CD14-positive monocyte (primary cell): ENCODE measurements at regions of chr11 and their contacts with region 1.

Region 1: DNA sequence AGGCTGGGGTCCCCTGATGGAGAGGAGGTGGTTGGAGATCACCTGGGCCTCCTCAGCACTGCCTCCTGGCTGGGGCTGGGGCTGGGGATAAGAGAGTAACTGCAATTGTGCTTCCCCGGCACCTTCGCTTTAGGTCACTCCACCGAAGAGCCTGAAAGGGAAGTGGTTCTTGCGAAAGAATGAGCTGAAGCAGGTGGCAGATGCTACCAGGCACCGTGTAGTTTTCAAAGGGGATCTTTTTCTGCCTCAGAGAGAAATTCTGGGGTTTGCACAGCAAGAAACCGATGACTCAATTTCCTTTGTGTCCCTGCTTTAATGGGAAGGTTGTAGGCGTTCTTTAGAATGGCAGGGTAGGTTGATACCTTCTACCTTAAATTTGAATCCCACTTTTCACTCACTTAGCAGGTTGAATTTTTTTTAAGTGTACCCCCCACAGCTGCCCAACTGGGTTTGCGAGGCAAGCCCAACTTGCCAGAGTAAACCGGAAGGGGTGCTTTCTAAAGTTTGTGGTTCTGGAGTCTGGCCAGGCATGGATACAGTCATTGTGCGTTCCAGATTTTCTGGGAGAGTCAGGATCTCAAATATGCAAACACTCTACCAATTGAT is 5.3 kb downstream of the CD44 start:
- DNase-seq: peak; percentile 75 to 95 (median 87)
- H3K4me3 ChIP-seq: peak overlapping the region; percentile 15 to 93 (median 15)
- H3K4me3 Mint-ChIP-seq: peak overlapping the region; percentile 64 to 73
- H3K27ac ChIP-seq: peak overlapping the region; percentile 67 to 98
- H3K27ac Mint-ChIP-seq: peak overlapping the region; percentile 84 to 98 (median 87)
- H3K4me1 ChIP-seq: peaks cover 53 to 78% of the 10 kb centered on the region in 2 donors
- H3K4me1 Mint-ChIP-seq: peaks cover 77% of the 10 kb centered on the region
- H3K27me3 ChIP-seq: no peaks in the 10 kb centered on the region
- H3K27me3 Mint-ChIP-seq: no peaks in the 10 kb centered on the region
- CTCF ChIP-seq: no peak

Region 2: GRCh38 chr11:34926101-34926830 is 218.0 kb before region 1 on chr11:
- intact Hi-C with region 1: loop called in 1 of 2 experiments (anchors 10 kb)
- DNase-seq: peak; percentile 18 to 46 (median 45)
- H3K4me3 ChIP-seq: no peak overlapping the region
- H3K4me3 Mint-ChIP-seq: no peak overlapping the region
- H3K27ac ChIP-seq: no peak overlapping the region
- H3K27ac Mint-ChIP-seq: no peak overlapping the region
- H3K4me1 ChIP-seq: peaks cover 0 to 3% of the 10 kb centered on the region in 2 donors
- H3K4me1 Mint-ChIP-seq: peaks cover 13% of the 10 kb centered on the region
- H3K27me3 ChIP-seq: no peaks in the 10 kb centered on the region
- H3K27me3 Mint-ChIP-seq: no peaks in the 10 kb centered on the region
- CTCF ChIP-seq: peak; percentile 85

Region 3: DNA sequence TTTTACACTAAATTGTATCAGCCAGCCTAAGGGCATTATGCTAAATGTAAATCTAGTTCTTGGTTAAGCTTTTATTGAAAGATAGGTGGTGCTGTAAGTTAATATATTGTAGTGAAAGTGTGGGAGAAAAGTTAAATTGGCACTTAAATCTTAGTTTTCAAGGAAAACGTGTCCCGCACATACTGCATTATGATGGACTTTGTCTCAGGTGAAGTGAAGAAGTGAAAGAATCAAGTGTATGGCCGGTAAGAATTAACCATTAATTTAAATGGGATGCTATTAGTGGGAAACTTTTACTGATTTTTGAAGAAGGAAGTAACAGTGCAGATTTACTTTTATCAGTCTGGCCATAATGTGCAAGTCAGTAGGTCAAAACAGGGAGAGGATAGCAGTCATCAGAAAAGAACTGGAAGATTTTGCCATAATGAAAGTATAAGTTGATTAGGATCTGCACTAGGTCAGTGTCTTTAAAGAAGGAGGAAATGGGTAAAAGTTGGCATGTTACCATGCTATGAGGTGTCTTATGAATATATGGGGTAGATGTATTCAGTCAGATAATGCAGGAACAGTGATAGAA is 146.2 kb before region 1 on chr11:
- intact Hi-C with region 1: loop called (anchors 5 kb)
- DNase-seq: peak in 2 of 3 donors; percentile 34 to 62
- H3K4me3 ChIP-seq: peak overlapping the region in 1 of 3 experiments; percentile 42
- H3K4me3 Mint-ChIP-seq: peak overlapping the region in 1 of 2 donors; percentile 36
- H3K27ac ChIP-seq: peak overlapping the region in 1 of 2 donors; percentile 46
- H3K27ac Mint-ChIP-seq: peak overlapping the region; percentile 1 to 89 (median 65)
- H3K4me1 ChIP-seq: peaks cover 6 to 7% of the 10 kb centered on the region in 2 donors
- H3K4me1 Mint-ChIP-seq: peaks cover 12% of the 10 kb centered on the region
- H3K27me3 ChIP-seq: no peaks in the 10 kb centered on the region
- H3K27me3 Mint-ChIP-seq: no peaks in the 10 kb centered on the region
- CTCF ChIP-seq: peak; percentile 81

Region 4: DNA sequence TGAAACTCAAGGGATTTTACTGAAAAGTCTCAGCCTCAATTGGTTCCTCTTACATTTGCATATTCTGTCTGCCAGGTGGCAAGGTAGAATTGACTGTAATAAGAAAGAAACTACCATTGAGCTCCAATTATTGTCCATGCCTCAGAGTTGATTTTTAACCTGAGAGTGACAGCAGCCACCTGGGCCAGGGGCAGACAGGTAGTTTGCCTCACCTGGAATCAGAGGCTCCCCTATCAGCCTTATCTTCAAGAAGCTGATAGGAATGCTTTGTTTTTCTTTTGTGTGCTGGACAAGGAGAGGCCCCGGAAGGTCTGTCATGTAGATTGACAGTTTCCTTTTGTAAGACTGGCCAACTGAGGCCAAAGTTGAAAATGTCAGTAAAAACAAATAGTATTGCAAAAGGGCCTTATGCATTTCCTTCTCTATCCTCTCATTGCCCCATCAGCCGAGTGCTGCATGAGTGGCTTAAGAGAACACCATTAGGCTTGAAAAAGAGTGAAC is 28.8 kb after region 1 on chr11:
- intact Hi-C with region 1: no loop called
- DNase-seq: peak; percentile 73 to 86 (median 81)
- H3K4me3 ChIP-seq: peak overlapping the region in 1 of 3 experiments; percentile 57
- H3K4me3 Mint-ChIP-seq: peak overlapping the region; percentile 31 to 71
- H3K27ac ChIP-seq: peak overlapping the region; percentile 71 to 86
- H3K27ac Mint-ChIP-seq: peak overlapping the region; percentile 87 to 96 (median 95)
- H3K4me1 ChIP-seq: peaks cover 70 to 85% of the 10 kb centered on the region in 2 donors
- H3K4me1 Mint-ChIP-seq: peaks cover 77% of the 10 kb centered on the region
- H3K27me3 ChIP-seq: no peaks in the 10 kb centered on the region
- H3K27me3 Mint-ChIP-seq: no peaks in the 10 kb centered on the region
- CTCF ChIP-seq: no peak